ENCODE measurements at regions of chr9 and their contacts with region 1.

Region 1: DNA sequence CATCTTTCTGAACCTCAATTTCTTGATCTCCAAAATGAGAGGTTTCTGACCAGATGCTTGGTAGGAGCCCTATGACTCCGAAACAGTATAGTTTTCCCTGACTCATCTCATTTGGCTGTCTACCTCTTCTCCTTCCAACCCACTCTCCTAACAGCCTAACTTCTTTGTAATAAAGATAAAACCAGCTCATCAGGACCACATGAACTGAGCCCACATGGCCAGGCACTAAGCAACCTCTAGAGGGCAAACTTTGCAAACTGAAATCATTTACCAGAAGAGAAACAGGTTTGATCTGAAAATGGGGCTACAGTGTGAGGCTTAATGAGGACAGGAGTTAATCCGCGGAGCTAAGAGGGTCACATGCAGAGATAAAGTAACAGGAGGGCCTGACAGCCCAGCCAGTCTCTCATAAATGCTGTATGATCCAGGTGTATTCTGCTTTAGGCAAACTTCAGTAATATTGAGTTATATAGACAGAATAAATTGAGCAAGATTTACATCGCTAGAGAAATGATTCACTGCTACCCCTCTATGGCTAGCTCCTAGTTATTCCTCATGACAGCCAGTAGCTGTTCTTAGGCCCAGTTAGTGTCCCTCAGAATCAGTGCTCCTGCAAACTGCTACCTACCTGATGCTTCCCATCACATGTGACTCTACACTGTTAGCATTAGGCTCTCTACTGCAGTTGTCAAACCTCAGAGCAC is 64.6 kb downstream of the ABCA1 start:
- DNase-seq: peak; percentile 73 to 80 (median 78)
- H3K4me3 ChIP-seq: no peak overlapping the region
- H3K27ac ChIP-seq: no peak overlapping the region
- H3K4me1 ChIP-seq: peaks cover 15 to 44% (median 32%) of the 10 kb centered on the region in 4 experiments
- H3K27me3 ChIP-seq: no peaks in the 10 kb centered on the region

Region 2: GRCh38 chr9:104743376-104743985 is 119.9 kb before region 1 on chr9:
- CTCF ChIA-PET with region 1: no interaction called
- POLR2A ChIA-PET with region 1: no interaction called
- DNase-seq: peak; percentile 80 to 92 (median 89)
- H3K4me3 ChIP-seq: no peak overlapping the region
- H3K27ac ChIP-seq: no peak overlapping the region
- H3K4me1 ChIP-seq: peaks cover 12 to 27% (median 18%) of the 10 kb centered on the region in 4 experiments
- H3K27me3 ChIP-seq: no peaks in the 10 kb centered on the region

Region 3: GRCh38 chr9:104780799-104781395 is 82.4 kb before region 1 on chr9:
- CTCF ChIA-PET with region 1: interaction called, 11 read pairs
- POLR2A ChIA-PET with region 1: no interaction called
- DNase-seq: peak; percentile 48 to 76 (median 74)
- H3K4me3 ChIP-seq: no peak overlapping the region
- H3K27ac ChIP-seq: no peak overlapping the region
- H3K4me1 ChIP-seq: peaks cover 6 to 17% (median 9%) of the 10 kb centered on the region in 4 experiments
- H3K27me3 ChIP-seq: no peaks in the 10 kb centered on the region

Region 4: GRCh38 chr9:104831681-104832080 is 31.7 kb before region 1 on chr9:
- CTCF ChIA-PET with region 1: interaction called, 10 read pairs
- POLR2A ChIA-PET with region 1: no interaction called
- DNase-seq: no peak
- H3K4me3 ChIP-seq: no peak overlapping the region
- H3K27ac ChIP-seq: no peak overlapping the region
- H3K4me1 ChIP-seq: peaks cover 15 to 48% (median 29%) of the 10 kb centered on the region in 4 experiments
- H3K27me3 ChIP-seq: no peaks in the 10 kb centered on the region

Region 5: DNA sequence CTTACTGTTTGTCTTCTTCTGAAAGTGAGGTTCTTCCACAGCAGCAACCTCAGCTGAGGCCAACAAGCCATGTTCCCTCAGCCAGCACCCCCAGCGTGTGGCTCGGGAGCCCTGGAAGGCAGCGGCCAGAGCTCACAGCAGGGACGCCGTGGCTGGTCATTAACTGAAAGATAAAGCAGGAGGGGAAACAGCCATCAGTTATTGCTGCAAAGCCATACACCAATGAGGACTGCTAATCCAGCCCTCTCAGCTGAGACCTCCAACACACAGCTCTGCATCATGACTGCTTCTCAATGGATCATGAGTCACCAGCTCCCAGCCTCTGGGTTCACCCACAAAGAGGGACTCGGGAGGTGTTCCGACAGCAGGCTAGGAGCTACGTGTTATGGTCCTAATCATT is 40.3 kb after region 1 on chr9:
- CTCF ChIA-PET with region 1: no interaction called
- POLR2A ChIA-PET with region 1: no interaction called
- DNase-seq: no peak
- H3K4me3 ChIP-seq: no peak overlapping the region
- H3K27ac ChIP-seq: no peak overlapping the region
- H3K4me1 ChIP-seq: peaks cover 0 to 9% (median 4%) of the 10 kb centered on the region in 4 experiments
- H3K27me3 ChIP-seq: no peaks in the 10 kb centered on the region

Region 6: GRCh38 chr9:105157130-105157583 is 293.8 kb after region 1 on chr9:
- CTCF ChIA-PET with region 1: interaction called, 34 read pairs
- POLR2A ChIA-PET with region 1: no interaction called
- DNase-seq: peak; percentile 63 to 74 (median 72)
- H3K4me3 ChIP-seq: no peak overlapping the region
- H3K27ac ChIP-seq: no peak overlapping the region
- H3K4me1 ChIP-seq: peaks cover 4 to 11% (median 8%) of the 10 kb centered on the region in 4 experiments
- H3K27me3 ChIP-seq: no peaks in the 10 kb centered on the region

Measured in common myeloid progenitor, CD34-positive (primary cell).